ENCODE measurements at regions of chr22 and their contacts with region 1.

Region 1: DNA sequence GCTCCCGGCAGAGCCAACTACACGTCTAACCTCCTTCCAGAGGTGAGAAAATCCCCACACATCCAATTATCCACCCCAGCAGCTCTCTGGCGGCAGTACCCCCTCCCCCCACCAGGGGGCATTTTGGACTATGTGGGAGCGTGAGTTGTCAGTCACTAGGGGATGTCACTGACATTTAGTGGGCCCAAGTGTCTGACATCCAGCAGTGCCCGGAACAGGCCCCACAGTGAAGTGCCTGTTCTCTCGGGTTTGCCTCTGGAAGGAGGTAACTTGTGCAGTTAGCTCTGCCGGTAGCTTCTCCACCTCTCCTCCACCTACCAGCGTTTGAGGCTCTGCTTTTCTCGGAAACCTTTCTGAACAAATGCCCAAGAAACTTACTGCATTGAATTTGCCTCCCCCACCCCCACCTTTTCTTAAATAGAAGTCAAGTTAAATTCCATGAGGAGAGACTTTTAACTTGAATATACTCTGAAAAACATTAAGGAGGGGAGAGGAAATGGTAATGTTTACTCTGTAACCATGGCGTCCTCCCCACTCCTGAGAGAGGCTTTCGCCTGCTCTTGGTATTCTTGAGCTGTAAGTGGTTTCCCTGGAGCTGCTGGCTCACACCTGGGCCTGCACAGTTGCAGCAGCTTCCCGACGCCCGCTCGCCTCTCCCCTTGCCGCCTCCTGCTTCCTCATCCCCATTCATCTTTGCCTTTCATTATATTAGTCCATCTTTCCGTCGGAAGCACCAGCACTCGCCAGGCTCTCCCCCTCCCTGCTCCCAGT is 112.8 kb downstream of the WNT7B start:
- DNase-seq: peak in 1 of 2 experiments; percentile 96
- H3K4me3 ChIP-seq: no peak overlapping the region
- H3K27ac ChIP-seq: no peak overlapping the region
- H3K4me1 ChIP-seq: peaks cover 0 to 8% (median 1%) of the 10 kb centered on the region in 4 experiments; a peak in 5 of 7 replicates
- H3K27me3 ChIP-seq: peaks cover 25 to 48% (median 44%) of the 10 kb centered on the region in 4 experiments
- CTCF ChIP-seq: peak; percentile 82 to 91 (median 86)
- EP300 ChIP-seq: no peak
- POLR2A ChIP-seq: no peak
- RAD21 ChIP-seq: peak; percentile 59 to 76

Region 2: GRCh38 chr22:45577746-45578523 is 286.2 kb before region 1 on chr22:
- CTCF ChIA-PET with region 1: interaction called, 15 read pairs
- POLR2A ChIA-PET with region 1: no interaction called
- DNase-seq: peak; percentile 59 to 97
- H3K4me3 ChIP-seq: no peak overlapping the region
- H3K27ac ChIP-seq: no peak overlapping the region
- H3K4me1 ChIP-seq: no peaks in the 10 kb centered on the region
- H3K27me3 ChIP-seq: no peaks in the 10 kb centered on the region
- CTCF ChIP-seq: peak; percentile 90 to 95 (median 94)
- EP300 ChIP-seq: no peak
- POLR2A ChIP-seq: no peak
- RAD21 ChIP-seq: peak; percentile 98 to 99

Region 3: DNA sequence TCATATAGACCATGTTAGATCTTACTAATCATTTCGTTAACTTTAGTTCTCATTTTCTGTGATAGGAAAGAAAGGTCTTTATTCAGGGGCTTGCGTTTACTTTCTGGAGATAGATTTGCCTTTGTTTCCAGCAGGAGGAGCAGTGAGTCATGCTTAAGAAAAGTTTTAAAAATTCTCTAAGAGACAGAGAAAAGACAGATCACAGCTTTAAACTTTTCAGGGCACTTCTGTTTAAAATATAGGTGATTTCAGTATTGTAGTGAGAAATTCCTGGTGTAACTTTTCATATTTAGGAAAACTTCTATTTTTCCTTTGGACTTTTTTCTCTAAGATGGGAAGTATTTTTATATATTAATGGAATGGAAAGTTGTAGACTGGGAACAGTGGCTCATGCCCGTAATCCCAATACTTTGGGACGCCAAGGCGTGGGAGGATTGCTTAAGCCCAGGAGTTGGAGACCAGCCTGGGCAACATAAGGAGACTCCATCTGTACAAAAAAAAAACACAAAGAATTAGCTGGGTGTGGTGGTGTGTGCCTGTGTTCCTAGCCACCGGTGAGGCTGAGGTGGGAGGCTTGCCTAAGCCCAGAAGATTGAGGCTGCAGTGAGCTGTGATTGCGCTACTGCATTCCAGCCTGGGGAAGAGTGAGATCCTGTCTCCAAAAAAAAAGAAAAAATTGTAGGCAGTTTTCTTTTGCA is 132.2 kb before region 1 on chr22:
- CTCF ChIA-PET with region 1: interaction called, 11 read pairs
- POLR2A ChIA-PET with region 1: no interaction called
- DNase-seq: no peak
- H3K4me3 ChIP-seq: no peak overlapping the region
- H3K27ac ChIP-seq: no peak overlapping the region
- H3K4me1 ChIP-seq: no peaks in the 10 kb centered on the region
- H3K27me3 ChIP-seq: no peaks in the 10 kb centered on the region
- CTCF ChIP-seq: peak in 2 of 3 experiments; percentile 40; a peak in 2 of 4 replicates
- EP300 ChIP-seq: no peak
- POLR2A ChIP-seq: no peak
- RAD21 ChIP-seq: peak; percentile 40 to 50

Region 4: DNA sequence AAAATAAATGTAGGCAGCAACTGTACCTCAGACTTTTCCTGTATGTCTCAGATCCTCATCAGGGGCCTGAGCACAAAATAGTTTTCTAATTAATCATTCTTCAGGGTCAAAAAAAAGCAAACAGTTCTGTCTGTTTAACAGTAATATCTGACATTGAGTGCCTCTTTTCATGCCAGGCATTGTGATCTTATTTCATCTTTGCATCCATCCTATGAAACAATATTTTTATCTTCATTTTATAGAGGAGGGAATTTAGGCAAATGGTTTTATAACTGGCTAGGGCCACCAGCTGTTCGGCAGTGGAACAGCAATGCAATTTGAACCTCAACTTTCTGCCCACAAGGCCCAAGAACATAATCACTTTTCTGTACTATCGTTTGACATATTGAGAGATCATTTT is 32.8 kb before region 1 on chr22:
- CTCF ChIA-PET with region 1: interaction called, 13 read pairs
- POLR2A ChIA-PET with region 1: no interaction called
- DNase-seq: no peak
- H3K4me3 ChIP-seq: no peak overlapping the region
- H3K27ac ChIP-seq: no peak overlapping the region
- H3K4me1 ChIP-seq: peaks cover 0 to 5% (median 0%) of the 10 kb centered on the region in 4 experiments; a peak in 1 of 7 replicates
- H3K27me3 ChIP-seq: no peaks in the 10 kb centered on the region
- CTCF ChIP-seq: peak in 2 of 3 experiments; percentile 15 to 45; a peak in 2 of 4 replicates
- EP300 ChIP-seq: no peak
- POLR2A ChIP-seq: no peak
- RAD21 ChIP-seq: peak; percentile 44 to 48

Region 5: DNA sequence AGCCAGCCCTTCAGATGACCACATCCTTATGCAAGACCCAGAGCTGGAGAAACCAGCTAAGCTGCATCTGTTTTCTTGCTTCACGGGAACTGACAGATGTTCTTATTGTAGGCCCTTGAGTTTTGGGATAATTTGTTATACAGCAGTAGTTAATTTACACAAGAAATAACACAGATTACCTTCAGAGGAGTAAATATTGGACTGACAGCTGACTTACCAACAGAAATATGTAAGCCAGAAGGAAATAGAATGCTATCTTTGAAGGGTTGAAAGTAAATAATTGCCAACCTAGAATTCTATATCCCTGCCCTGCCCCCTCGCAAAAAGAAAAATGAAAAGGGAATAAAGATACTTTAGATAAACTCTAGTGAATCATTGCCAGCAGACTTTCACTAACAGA is 11.3 kb before region 1 on chr22:
- CTCF ChIA-PET with region 1: interaction called, 20 read pairs
- POLR2A ChIA-PET with region 1: no interaction called
- DNase-seq: no peak
- H3K4me3 ChIP-seq: no peak overlapping the region
- H3K27ac ChIP-seq: no peak overlapping the region
- H3K4me1 ChIP-seq: no peaks in the 10 kb centered on the region
- H3K27me3 ChIP-seq: no peaks in the 10 kb centered on the region
- CTCF ChIP-seq: no peak
- EP300 ChIP-seq: no peak
- POLR2A ChIP-seq: no peak
- RAD21 ChIP-seq: no peak

Region 6: DNA sequence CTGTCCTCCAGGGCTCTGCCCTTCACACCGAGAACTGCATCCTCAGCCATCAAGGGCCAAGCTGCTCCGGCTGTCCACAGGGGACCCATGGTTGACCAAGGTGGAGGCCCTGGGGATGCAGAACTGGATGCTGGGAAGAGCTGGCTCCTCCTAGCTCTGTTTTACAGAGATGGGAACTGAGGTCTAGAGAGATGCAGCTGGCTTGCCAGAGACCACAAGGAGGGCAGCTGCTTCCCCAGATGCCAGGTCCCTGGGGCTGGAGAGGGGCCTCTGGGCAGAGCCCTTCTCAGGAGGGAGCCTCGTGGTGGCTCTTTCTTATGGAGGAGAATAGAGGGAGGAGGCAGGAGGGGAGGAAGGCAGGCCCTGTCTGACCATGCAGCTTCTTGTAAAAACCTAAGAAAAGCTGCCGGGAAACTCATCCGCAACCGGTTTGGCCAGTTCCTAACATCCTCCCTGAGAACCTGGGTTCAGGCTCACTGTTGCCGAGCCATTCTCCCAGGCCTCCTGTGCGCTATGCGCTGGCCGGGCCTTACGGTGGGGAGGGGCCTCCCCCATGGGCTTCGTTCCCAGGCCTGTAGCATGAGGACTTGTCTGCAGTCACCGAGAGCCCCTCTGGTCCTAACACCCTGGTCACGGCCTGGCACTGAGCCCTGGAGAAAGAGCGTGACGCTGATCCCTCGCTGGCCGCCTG is 32.2 kb after region 1 on chr22:
- CTCF ChIA-PET with region 1: interaction called, 39 read pairs
- POLR2A ChIA-PET with region 1: interaction called, 7 read pairs
- DNase-seq: peak in 1 of 2 experiments; percentile 79
- H3K4me3 ChIP-seq: no peak overlapping the region
- H3K27ac ChIP-seq: no peak overlapping the region
- H3K4me1 ChIP-seq: peaks cover 0 to 20% (median 13%) of the 10 kb centered on the region in 4 experiments; a peak in 6 of 7 replicates
- H3K27me3 ChIP-seq: peaks cover 0 to 5% (median under 1%) of the 10 kb centered on the region in 4 experiments; a peak in 3 of 7 replicates
- CTCF ChIP-seq: no peak
- EP300 ChIP-seq: no peak
- POLR2A ChIP-seq: 0 out of 3 replicates have a peak, but pooled peaks of 1 of the 2 experiments have one; percentile 42
- RAD21 ChIP-seq: peak in 1 of 2 experiments; percentile 14; a peak in 1 of 4 replicates

Region 7: GRCh38 chr22:45938913-45939312 is 74.7 kb after region 1 on chr22:
- CTCF ChIA-PET with region 1: interaction called, 12 read pairs
- POLR2A ChIA-PET with region 1: no interaction called
- DNase-seq: no peak
- H3K4me3 ChIP-seq: no peak overlapping the region
- H3K27ac ChIP-seq: no peak overlapping the region
- H3K4me1 ChIP-seq: no peaks in the 10 kb centered on the region
- H3K27me3 ChIP-seq: no peaks in the 10 kb centered on the region; a peak in 2 of 7 replicates
- CTCF ChIP-seq: no peak
- EP300 ChIP-seq: no peak
- POLR2A ChIP-seq: no peak
- RAD21 ChIP-seq: no peak

Region 8: DNA sequence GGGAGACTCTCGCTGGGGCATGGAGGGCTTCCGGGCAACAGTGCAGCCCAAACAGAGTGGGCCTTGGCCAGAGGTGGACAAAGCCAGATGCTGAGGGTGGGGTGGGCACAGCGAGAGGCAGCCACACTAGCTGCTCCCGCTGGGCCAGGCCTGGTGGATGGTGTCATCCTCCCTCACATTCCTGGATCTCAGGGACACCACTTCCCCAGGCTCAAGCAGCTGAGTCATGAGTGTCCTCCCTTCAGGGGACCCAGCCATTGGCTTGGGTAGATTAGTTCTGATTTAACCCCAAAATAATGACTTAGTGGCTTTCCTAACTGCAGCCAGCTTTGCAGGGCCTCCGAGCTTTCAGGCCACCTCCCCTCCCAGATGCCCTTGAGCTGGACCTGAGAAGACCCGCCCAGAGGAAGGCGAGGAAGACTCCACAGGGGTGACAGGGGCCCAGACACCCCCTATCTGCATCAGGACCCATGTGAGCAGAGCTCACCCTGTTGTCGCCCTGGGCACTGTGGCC is 138.6 kb after region 1 on chr22:
- CTCF ChIA-PET with region 1: no interaction called
- POLR2A ChIA-PET with region 1: no interaction called
- DNase-seq: no peak
- H3K4me3 ChIP-seq: no peak overlapping the region
- H3K27ac ChIP-seq: no peak overlapping the region
- H3K4me1 ChIP-seq: peaks cover 0 to 2% (median 0%) of the 10 kb centered on the region in 4 experiments; a peak in 2 of 7 replicates
- H3K27me3 ChIP-seq: no peaks in the 10 kb centered on the region
- CTCF ChIP-seq: no peak
- EP300 ChIP-seq: no peak
- POLR2A ChIP-seq: no peak
- RAD21 ChIP-seq: no peak

Region 9: DNA sequence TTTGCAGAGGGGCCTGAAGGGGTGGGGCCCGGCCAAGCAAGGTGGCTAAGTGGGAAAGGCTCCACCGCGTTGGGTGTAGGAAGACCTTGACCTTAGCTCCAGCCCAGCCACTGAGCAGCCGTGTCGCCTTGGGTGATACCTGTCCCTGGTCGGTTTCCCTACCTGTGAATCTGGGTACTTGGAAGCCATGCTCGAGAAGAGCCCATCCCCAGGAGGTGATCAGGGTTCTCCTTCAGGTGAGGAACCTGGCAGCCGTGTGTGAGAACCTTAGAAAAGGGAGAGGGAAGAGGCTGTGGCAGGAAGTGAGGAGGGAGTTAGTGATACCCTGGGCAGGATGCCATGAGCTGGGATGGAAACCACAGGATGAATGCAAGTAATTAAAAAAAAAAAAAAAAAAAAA is 307.8 kb after region 1 on chr22:
- CTCF ChIA-PET with region 1: no interaction called
- POLR2A ChIA-PET with region 1: no interaction called
- DNase-seq: no peak
- H3K4me3 ChIP-seq: no peak overlapping the region
- H3K27ac ChIP-seq: no peak overlapping the region
- H3K4me1 ChIP-seq: no peaks in the 10 kb centered on the region
- H3K27me3 ChIP-seq: no peaks in the 10 kb centered on the region
- CTCF ChIP-seq: no peak
- EP300 ChIP-seq: no peak
- POLR2A ChIP-seq: no peak
- RAD21 ChIP-seq: no peak

Measured in H1 (cell line).